ENCODE measurements at regions of chr10 and their contacts with region 1.

Region 1: DNA sequence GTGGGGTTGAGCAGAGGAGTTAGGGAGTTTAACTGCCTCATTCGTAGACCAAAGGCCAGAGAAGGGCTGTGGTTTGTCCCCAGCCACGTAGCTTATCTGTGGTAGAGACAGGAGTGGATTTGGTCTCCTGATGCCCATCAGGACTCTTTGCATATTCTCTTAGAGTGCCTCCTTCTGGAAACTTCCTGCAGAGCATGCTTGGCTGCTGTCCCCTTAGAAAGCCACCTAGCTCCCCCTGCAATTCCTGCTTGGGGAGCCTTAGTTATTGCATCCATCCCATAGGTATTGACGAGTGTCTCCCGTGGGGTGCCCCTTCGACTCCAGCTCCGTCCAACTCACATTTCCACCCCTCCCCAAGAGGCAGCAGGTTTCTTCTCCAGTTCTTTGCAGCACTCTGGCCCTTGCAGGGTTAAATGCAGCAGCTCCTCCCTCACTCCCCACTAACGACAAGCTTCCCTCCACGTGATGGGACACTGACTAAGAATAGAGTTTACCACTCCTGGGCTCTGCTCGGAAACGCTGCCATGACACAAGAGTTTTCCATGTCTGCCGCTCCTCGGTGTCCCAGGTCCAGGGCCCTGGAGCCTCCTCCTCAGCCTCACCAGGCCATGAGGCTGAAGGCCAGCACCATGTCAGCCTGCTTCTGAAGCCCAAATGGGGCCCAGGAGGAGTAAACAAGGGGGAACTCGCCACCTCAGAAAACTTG is 147.8 kb upstream of the UNC5B start:
- DNase-seq: no peak
- H3K4me3 ChIP-seq: no peak overlapping the region
- H3K27ac ChIP-seq: no peak overlapping the region
- H3K4me1 ChIP-seq: peaks cover 0 to 9% (median 3%) of the 10 kb centered on the region in 4 experiments; a peak in 5 of 7 replicates
- H3K27me3 ChIP-seq: no peaks in the 10 kb centered on the region
- CTCF ChIP-seq: peak; percentile 3 to 57 (median 53)
- EP300 ChIP-seq: no peak
- POLR2A ChIP-seq: no peak
- RAD21 ChIP-seq: peak; percentile 34 to 52

Region 2: GRCh38 chr10:71015674-71016073 is 48.9 kb before region 1 on chr10:
- CTCF ChIA-PET with region 1: interaction called, 22 read pairs
- POLR2A ChIA-PET with region 1: interaction called, 3 read pairs
- DNase-seq: no peak
- H3K4me3 ChIP-seq: no peak overlapping the region
- H3K27ac ChIP-seq: no peak overlapping the region
- H3K4me1 ChIP-seq: no peaks in the 10 kb centered on the region
- H3K27me3 ChIP-seq: no peaks in the 10 kb centered on the region
- CTCF ChIP-seq: no peak
- EP300 ChIP-seq: no peak
- POLR2A ChIP-seq: no peak
- RAD21 ChIP-seq: no peak

Region 3: GRCh38 chr10:71040846-71041605 is 23.5 kb before region 1 on chr10:
- CTCF ChIA-PET with region 1: interaction called, 31 read pairs
- POLR2A ChIA-PET with region 1: interaction called, 4 read pairs
- DNase-seq: no peak
- H3K4me3 ChIP-seq: no peak overlapping the region
- H3K27ac ChIP-seq: no peak overlapping the region
- H3K4me1 ChIP-seq: peaks cover 0 to 3% (median 0%) of the 10 kb centered on the region in 4 experiments; a peak in 1 of 7 replicates
- H3K27me3 ChIP-seq: no peaks in the 10 kb centered on the region
- CTCF ChIP-seq: no peak
- EP300 ChIP-seq: no peak
- POLR2A ChIP-seq: no peak
- RAD21 ChIP-seq: no peak

Region 4: GRCh38 chr10:71075086-71075758 is 10.7 kb after region 1 on chr10:
- CTCF ChIA-PET with region 1: interaction called, 29 read pairs
- POLR2A ChIA-PET with region 1: no interaction called
- DNase-seq: no peak
- H3K4me3 ChIP-seq: no peak overlapping the region
- H3K27ac ChIP-seq: no peak overlapping the region
- H3K4me1 ChIP-seq: peaks cover 3 to 27% (median 11%) of the 10 kb centered on the region in 4 experiments; a peak in 6 of 7 replicates
- H3K27me3 ChIP-seq: no peaks in the 10 kb centered on the region; a peak in 2 of 7 replicates
- CTCF ChIP-seq: no peak
- EP300 ChIP-seq: no peak
- POLR2A ChIP-seq: no peak
- RAD21 ChIP-seq: no peak

Region 5: DNA sequence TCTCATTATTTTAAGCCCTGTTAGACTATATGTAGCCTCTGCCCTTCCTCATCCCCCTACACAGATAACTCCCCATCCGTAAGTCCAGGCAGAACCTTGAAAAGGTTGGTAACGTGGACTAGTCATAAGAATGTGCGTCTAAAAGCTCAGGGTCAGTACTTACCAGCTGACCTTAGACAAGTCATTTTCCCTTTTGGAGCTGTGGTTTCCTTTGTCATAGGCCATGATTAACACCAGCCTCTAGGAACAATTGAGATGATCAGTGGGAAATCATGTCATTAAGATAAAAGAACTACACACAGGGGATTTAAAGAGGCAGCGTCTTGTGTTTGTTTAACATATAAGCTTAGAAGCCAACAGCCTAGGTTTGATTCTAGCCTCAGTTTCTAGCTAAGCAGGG is 140.9 kb after region 1 on chr10:
- CTCF ChIA-PET with region 1: interaction called, 14 read pairs
- POLR2A ChIA-PET with region 1: interaction called, 4 read pairs
- DNase-seq: no peak
- H3K4me3 ChIP-seq: no peak overlapping the region
- H3K27ac ChIP-seq: no peak overlapping the region
- H3K4me1 ChIP-seq: peaks cover 0 to 9% (median 4%) of the 10 kb centered on the region in 4 experiments; a peak in 5 of 7 replicates
- H3K27me3 ChIP-seq: peaks cover 1 to 11% (median 7%) of the 10 kb centered on the region in 4 experiments
- CTCF ChIP-seq: no peak
- EP300 ChIP-seq: no peak
- POLR2A ChIP-seq: no peak
- RAD21 ChIP-seq: no peak